Heart left ventricle (tissue), 16 donors: ENCODE measurements at regions of chr7 and their contacts with region 1.

Region 1: DNA sequence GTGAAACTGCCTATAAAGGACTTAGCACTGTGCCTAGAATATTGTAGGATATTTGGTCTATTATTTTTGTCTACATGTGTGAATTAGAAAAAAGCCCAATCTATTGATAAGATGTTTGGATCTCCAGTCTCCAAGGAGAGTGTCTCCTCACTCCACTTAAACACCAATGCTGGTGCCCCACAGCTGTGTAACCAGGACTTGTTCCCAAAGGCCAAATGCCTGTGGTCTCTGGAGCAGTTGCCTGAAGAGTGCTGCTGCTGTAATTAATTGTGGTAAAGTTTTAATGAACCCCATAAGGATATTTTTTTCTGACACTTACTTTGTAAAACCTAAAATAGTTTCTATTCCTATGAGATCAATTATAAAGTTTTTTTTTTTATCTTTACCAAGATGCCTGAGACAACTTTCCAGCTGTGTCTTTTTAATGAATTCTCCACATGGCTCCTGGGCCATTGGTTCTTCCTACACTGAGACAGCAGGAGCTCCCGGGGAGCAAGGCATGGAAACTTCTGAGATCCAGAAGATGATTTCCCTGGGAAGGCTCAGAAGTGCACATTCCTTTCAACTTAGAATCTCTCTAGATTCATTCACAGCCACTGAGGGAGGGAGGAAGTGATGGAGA is 11.2 kb upstream of the OR2A5 start:
- DNase-seq: peak in 3 of 5 donors; percentile 29 to 45 (median 35)
- ATAC-seq: peak in 3 of 4 donors; percentile 47 to 77 (median 74)
- H3K4me3 ChIP-seq: no peak overlapping the region
- H3K27ac ChIP-seq: peak overlapping the region in 5 of 12 donors; percentile 31 to 71 (median 65)
- H3K4me1 ChIP-seq: peaks cover 0 to 21% (median 0%) of the 10 kb centered on the region in 12 donors
- H3K27me3 ChIP-seq: no peaks in the 10 kb centered on the region
- CTCF ChIP-seq: no peak
- POLR2A ChIP-seq: no peak

Region 2: GRCh38 chr7:144127703-144128334 is 90.3 kb after region 1 on chr7:
- intact Hi-C with region 1: loop called in 3 of 10 experiments (anchors 5 to 10 kb)
- DNase-seq: peak; percentile 74 to 89 (median 81)
- ATAC-seq: peak in 3 of 4 donors; percentile 76 to 85 (median 77)
- H3K4me3 ChIP-seq: no peak overlapping the region
- H3K27ac ChIP-seq: no peak overlapping the region
- H3K4me1 ChIP-seq: no peaks in the 10 kb centered on the region
- H3K27me3 ChIP-seq: no peaks in the 10 kb centered on the region
- CTCF ChIP-seq: peak; percentile 65 to 85 (median 76)
- POLR2A ChIP-seq: no peak